Motor neuron (in vitro differentiated cells): ENCODE measurements at regions of chr15 and their contacts with region 1.

Region 1: DNA sequence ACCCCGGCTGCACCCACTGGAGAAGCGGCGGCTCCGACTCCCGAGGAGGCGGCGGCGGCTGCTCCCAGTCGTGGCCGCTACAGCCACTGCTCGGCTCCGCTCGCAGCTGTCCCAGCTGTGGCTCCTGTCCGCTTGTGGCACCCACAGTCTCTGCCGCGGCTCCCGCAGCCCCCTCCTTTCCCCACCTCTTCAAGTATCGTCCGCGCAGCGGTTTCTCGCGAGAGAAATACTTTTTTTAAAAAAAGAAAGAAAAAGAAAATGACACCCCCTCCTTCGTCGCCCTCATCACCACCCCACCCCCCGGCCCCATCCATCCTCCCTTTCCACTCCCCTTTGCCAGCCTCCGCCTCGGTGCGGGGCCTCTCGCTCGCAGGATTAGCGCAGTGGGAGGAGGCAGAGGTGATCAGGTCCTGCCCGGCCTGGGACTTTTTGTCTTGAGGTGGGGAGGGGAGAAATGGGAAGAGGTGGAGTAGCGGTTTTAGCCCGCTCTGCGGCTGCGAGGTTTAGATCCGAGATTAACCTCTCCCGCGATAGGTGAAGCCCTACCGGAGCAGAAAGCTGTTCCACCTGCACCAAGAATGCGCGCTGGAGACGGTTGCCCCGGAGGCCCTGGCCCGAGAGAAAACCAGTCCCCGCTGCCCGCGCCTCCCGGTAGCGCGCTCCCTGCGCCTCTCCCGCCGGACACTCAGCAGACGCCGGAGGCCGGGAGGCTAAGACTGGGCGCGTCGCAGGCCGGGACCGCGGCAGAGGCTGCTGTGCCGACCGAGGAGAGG is at the start of gene FBN1:
- ATAC-seq: peak; percentile 70 to 91 (median 86)
- H3K4me3 ChIP-seq: peak within 1 kb of the TSS; percentile 55 to 90 (median 62)
- H3K27ac ChIP-seq: peak within 1 kb of the TSS; percentile 24 to 72
- H3K4me1 ChIP-seq: peaks cover 13% of the 10 kb centered on the region in 2 donors
- total RNA-seq, gene FBN1: 3.4 to 777 (median 10.1) TPM

Region 2: DNA sequence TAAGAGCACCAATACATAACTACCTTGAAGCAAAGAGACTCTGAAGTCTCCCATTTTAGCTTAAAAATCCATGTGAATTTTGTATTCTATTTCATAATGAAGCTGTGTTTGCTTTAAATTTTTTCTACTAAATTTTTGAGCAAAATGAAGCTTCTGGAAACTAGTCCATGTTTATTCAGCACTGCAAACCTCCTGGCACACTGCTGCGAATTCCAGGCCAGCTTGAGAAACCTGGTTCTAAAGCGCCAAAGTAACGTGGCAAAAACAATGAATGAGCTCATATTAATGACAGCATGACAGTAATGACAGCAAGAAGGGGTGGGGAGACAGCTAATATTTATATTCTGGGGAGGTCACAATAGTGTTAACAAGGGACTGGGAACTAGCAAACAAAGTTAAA is 139.5 kb after region 1 on chr15:
- in situ Hi-C with region 1: no loop called
- ATAC-seq: peak in 1 of 8 experiments; percentile 25
- H3K4me3 ChIP-seq: no peak overlapping the region
- H3K27ac ChIP-seq: no peak overlapping the region
- H3K4me1 ChIP-seq: no peaks in the 10 kb centered on the region

Region 3: GRCh38 chr15:48810414-48811317 is 164.9 kb after region 1 on chr15 and contains the start of gene CEP152:
- in situ Hi-C with region 1: loop called in 1 of 9 experiments (anchors 25 kb)
- ATAC-seq: peak; percentile 96 to 98 (median 98)
- H3K4me3 ChIP-seq: peak within 1 kb of the TSS; percentile 38 to 72 (median 54)
- H3K27ac ChIP-seq: no peak within 1 kb of the TSS
- H3K4me1 ChIP-seq: peaks cover 0 to 3% of the 10 kb centered on the region in 2 donors
- total RNA-seq, gene CEP152: 1.4 to 30.2 (median 3.5) TPM